A673 (cell line): ENCODE measurements at regions of chr7 and their contacts with region 1.

Region 1: DNA sequence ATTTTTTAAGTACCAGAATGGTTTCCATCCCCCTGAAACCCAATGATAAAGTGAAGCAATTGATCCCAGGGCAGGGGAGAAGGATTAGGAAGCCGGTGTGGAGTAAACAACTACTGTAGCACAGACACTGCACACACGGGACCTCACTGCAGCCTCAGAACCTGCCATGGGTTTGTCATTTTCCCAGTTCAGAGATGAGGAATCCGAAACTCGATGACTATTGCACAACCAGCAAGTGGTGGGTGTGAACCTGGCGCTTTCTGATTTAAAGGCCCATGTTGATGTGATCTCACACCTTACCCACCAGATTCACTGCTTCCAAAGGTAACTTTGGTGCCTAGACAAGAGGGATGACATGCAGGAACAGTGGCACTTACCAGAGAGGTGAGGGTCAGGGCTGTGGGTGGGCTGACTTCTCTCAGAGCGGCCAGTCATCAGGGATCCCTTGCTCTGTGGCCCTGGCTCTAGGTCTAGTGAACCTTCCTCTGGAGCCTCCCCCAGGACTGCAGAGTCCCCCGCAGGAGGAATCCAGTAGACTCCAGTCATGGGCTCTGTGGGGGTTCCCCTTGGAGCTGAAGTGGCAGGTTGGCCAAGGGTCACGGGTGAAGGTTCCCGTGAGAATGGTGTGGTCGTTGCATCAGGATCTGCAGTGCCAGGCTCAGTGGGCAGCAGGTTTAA is 62.8 kb downstream of the PKD1L1 start:
- DNase-seq: no peak
- H3K4me3 ChIP-seq: no peak overlapping the region
- H3K27ac ChIP-seq: no peak overlapping the region
- H3K4me1 ChIP-seq: no peaks in the 10 kb centered on the region
- H3K27me3 ChIP-seq: peaks cover 68% of the 10 kb centered on the region
- CTCF ChIP-seq: no peak

Region 2: GRCh38 chr7:47873762-47874161 is 11.7 kb before region 1 on chr7:
- CTCF ChIA-PET with region 1: no interaction called
- POLR2A ChIA-PET with region 1: interaction called, 12 read pairs
- intact Hi-C with region 1: no loop called
- DNase-seq: no peak
- H3K4me3 ChIP-seq: no peak overlapping the region
- H3K27ac ChIP-seq: no peak overlapping the region
- H3K4me1 ChIP-seq: no peaks in the 10 kb centered on the region
- H3K27me3 ChIP-seq: peaks cover 29% of the 10 kb centered on the region
- CTCF ChIP-seq: no peak

Region 3: DNA sequence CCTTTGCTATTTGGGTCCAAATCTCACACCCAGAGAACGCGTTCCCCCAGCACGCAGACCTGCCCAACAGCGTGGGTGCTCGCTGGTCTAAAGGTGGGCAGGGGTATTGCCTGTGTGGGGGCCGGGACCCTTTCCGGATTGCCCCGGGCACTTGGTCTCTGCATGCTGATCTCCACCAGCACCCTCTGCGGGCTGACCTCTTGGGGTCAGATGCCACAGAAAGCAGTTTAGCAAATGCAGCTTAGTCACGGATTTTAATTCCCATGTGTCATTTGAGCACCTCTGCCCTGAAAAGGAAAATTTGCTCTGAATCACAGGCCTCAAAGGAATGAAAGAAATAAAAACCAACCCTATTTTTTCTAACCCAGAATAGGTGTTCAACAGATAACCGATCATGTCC is 16.1 kb after region 1 on chr7:
- CTCF ChIA-PET with region 1: no interaction called
- POLR2A ChIA-PET with region 1: interaction called, 18 read pairs
- intact Hi-C with region 1: no loop called
- DNase-seq: no peak
- H3K4me3 ChIP-seq: no peak overlapping the region
- H3K27ac ChIP-seq: no peak overlapping the region
- H3K4me1 ChIP-seq: no peaks in the 10 kb centered on the region
- H3K27me3 ChIP-seq: peaks cover 5% of the 10 kb centered on the region
- CTCF ChIP-seq: no peak